Sigmoid colon (tissue), 7 donors: ENCODE measurements at regions of chr9 and their contacts with region 1.

Region 1: GRCh38 chr9:86282077-86282978 is at the start of gene ISCA1:
- DNase-seq: peak; percentile 98
- H3K4me3 ChIP-seq: peak within 1 kb of the TSS; percentile 79 to 98 (median 91)
- H3K27ac ChIP-seq: peak within 1 kb of the TSS; percentile 95 to 99 (median 96)
- H3K4me1 ChIP-seq: peaks cover 0 to 39% (median 32%) of the 10 kb centered on the region in 4 donors
- H3K27me3 ChIP-seq: no peaks in the 10 kb centered on the region
- CTCF ChIP-seq: no peak
- EP300 ChIP-seq: peak in 2 of 4 donors; percentile 30 to 36
- POLR2A ChIP-seq: peak; percentile 70 to 78
- total RNA-seq, gene ISCA1: 53.5 to 64.9 (median 58.2) TPM

Region 2: DNA sequence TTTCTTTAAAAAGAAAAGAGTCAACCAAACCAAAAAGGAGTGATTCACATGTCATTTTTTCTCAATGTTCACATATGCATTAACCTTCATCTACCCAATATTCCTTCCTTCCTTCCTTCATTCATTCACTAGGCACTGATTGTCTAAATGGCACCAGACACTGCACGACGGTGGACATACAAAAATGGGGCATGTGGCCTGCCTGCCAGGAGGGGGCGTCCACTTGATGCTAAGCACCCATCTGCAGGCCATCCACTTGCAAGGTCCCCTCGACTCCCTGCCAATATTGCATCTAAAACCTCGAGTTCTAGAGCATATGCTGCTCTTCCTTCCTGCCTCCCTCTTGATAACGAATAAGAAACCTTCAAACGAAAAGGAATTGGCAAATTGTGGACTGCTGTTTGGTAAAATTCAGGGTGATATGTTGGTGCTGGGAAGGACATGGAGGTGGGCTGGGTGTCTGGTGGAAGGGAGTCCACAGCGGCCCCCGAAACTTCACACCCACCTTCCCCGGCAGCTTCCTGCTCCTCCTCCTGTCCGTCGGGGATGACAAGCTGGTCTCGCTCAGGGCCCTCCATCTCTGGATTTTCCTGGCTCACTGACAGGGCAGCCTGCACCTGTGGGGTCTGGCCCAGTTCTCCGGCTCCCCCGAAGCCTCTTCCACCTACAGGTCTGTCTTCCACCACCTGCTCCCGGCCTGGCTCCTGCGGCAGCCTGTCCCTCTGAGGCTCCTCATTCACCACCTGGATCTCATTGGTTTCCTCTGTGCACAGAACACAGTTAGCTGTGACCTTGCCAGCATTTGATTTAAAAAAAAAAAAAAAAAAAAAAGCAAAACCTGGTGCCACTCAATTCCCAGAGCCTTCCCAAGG is 247.2 kb before region 1 on chr9:
- intact Hi-C with region 1: loop called (anchors 10 kb)
- DNase-seq: no peak
- H3K4me3 ChIP-seq: no peak overlapping the region
- H3K27ac ChIP-seq: no peak overlapping the region
- H3K4me1 ChIP-seq: no peaks in the 10 kb centered on the region
- H3K27me3 ChIP-seq: no peaks in the 10 kb centered on the region
- CTCF ChIP-seq: peak; percentile 8 to 50 (median 36)
- EP300 ChIP-seq: no peak
- POLR2A ChIP-seq: no peak

Region 3: GRCh38 chr9:86098824-86099700 is 183.3 kb before region 1 on chr9 and contains the start of gene GOLM1:
- intact Hi-C with region 1: loop called (anchors 5 kb)
- DNase-seq: peak; percentile 73
- H3K4me3 ChIP-seq: peak within 1 kb of the TSS; percentile 61 to 88 (median 76)
- H3K27ac ChIP-seq: peak within 1 kb of the TSS; percentile 73 to 81 (median 78)
- H3K4me1 ChIP-seq: peaks cover 0 to 14% (median 8%) of the 10 kb centered on the region in 4 donors
- H3K27me3 ChIP-seq: no peaks in the 10 kb centered on the region
- CTCF ChIP-seq: no peak
- EP300 ChIP-seq: no peak
- POLR2A ChIP-seq: no peak
- total RNA-seq, gene GOLM1: 9.2 to 14.3 (median 13.2) TPM

Region 4: GRCh38 chr9:86202338-86202882 is 79.9 kb before region 1 on chr9:
- intact Hi-C with region 1: loop called (anchors 5 kb)
- DNase-seq: no peak
- H3K4me3 ChIP-seq: no peak overlapping the region
- H3K27ac ChIP-seq: no peak overlapping the region
- H3K4me1 ChIP-seq: peaks cover 0 to 6% (median 0%) of the 10 kb centered on the region in 4 donors
- H3K27me3 ChIP-seq: no peaks in the 10 kb centered on the region
- CTCF ChIP-seq: peak in 3 of 4 experiments; percentile 44 to 78 (median 65)
- EP300 ChIP-seq: no peak
- POLR2A ChIP-seq: no peak

Region 5: GRCh38 chr9:86354011-86354817 is 71.9 kb after region 1 on chr9 and contains the start of gene TUT7:
- intact Hi-C with region 1: loop called (anchors 5 kb)
- DNase-seq: peak; percentile 97
- H3K4me3 ChIP-seq: peak within 1 kb of the TSS; percentile 65 to 98 (median 77)
- H3K27ac ChIP-seq: peak within 1 kb of the TSS; percentile 93 to 99 (median 94)
- H3K4me1 ChIP-seq: peaks cover 0 to 48% (median 43%) of the 10 kb centered on the region in 4 donors
- H3K27me3 ChIP-seq: no peaks in the 10 kb centered on the region
- CTCF ChIP-seq: no peak
- EP300 ChIP-seq: peak in 1 of 4 donors; percentile 28
- POLR2A ChIP-seq: peak; percentile 41 to 57
- total RNA-seq, gene TUT7: 39.2 to 59.0 (median 48.2) TPM

Region 6: GRCh38 chr9:86368871-86369521 is 86.7 kb after region 1 on chr9:
- intact Hi-C with region 1: no loop called
- DNase-seq: no peak
- H3K4me3 ChIP-seq: no peak overlapping the region
- H3K27ac ChIP-seq: no peak overlapping the region
- H3K4me1 ChIP-seq: no peaks in the 10 kb centered on the region
- H3K27me3 ChIP-seq: no peaks in the 10 kb centered on the region
- CTCF ChIP-seq: no peak
- EP300 ChIP-seq: no peak
- POLR2A ChIP-seq: no peak